ENCODE measurements at regions of chr9 and their contacts with region 1.

Region 1: DNA sequence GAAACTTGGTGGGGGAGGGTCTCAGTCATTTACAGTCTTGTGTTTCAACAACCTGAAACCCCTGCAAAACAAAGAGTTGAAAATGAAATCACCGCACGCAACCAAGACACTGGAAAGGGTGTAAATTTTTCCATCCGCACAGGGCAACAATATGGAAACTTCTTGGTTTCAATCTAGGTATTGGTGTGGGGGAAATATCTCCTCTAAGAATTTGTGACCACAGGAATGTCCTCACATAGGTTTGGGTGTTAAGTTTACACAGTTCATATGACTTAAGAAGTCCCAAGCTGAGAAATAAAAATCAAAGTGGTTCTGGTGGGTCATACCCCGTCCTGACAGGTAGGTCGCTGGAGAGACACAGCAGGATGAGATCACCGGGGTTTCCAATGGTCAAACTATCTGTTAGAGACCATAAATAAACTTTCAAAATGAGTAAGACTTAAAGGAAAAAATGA is 51.9 kb upstream of the PIP5K1B start:
- DNase-seq: no peak
- H3K4me3 ChIP-seq: no peak overlapping the region
- H3K27ac ChIP-seq: no peak overlapping the region
- H3K4me1 ChIP-seq: no peaks in the 10 kb centered on the region
- H3K27me3 ChIP-seq: no peaks in the 10 kb centered on the region

Region 2: GRCh38 chr9:68822596-68823165 is 169.5 kb after region 1 on chr9:
- in situ Hi-C with region 1: loop called (anchors 10 kb)
- DNase-seq: no peak
- H3K4me3 ChIP-seq: no peak overlapping the region
- H3K27ac ChIP-seq: no peak overlapping the region
- H3K4me1 ChIP-seq: no peaks in the 10 kb centered on the region
- H3K27me3 ChIP-seq: no peaks in the 10 kb centered on the region; the same call in none of the 2 replicates

Region 3: DNA sequence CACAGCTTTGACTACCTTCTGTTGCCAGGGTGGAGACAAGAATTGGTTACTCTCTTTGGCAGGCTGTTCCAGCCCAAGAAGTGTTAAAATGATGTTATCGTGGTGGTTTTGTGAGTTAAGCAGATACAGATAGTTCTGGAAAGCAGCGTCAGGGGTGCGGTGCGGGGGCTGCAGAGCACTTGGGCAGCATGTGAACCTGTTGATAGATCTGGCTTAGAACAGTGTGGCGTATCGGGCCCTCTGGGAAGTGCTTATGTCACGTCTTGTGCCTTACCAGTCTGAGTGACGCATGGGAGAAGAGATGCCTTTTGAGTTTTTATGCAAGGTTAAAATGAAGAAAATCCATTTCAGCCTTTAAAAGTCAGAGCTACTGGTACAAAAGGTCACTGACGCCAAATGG is 208.3 kb after region 1 on chr9:
- in situ Hi-C with region 1: no loop called
- DNase-seq: no peak
- H3K4me3 ChIP-seq: no peak overlapping the region
- H3K27ac ChIP-seq: no peak overlapping the region
- H3K4me1 ChIP-seq: no peaks in the 10 kb centered on the region
- H3K27me3 ChIP-seq: no peaks in the 10 kb centered on the region; the same call in 1 of the 2 replicates

Region 4: DNA sequence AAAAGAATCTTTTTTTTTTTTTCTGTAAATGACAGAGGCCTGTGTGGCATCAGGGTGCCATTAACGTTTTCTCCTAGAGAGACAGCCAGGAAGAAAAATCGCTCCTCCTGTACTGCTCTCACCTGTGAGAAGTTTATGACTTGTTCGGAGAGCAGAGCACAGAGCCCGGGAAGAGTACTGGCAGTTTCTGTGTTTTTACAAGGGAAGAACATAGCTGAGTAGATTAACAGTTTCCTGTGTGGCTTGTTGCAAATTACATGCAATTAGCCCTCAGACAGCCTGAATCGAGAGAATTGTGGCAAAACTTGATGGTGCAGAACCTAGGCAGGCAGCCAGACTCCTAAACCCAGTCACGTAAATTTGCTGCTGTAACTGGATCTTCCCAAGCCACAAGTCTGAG is 328.6 kb after region 1 on chr9:
- in situ Hi-C with region 1: no loop called
- DNase-seq: no peak
- H3K4me3 ChIP-seq: no peak overlapping the region
- H3K27ac ChIP-seq: no peak overlapping the region
- H3K4me1 ChIP-seq: no peaks in the 10 kb centered on the region
- H3K27me3 ChIP-seq: no peaks in the 10 kb centered on the region

Region 5: DNA sequence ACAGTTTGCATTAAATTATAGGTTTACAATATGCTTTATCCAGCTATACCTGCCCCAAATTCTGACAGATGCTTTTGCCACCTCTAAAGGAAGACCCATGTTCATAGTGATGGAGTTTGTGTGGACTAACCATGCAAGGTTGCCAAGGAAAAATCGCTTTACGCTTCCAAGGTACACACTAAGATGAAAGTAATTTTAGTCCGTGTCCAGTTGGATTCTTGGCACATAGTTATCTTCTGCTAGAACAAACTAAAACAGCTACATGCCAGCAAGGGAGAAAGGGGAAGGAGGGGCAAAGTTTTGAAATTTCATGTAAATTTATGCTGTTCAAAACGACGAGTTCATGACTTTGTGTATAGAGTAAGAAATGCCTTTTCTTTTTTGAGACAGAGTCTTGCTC is 423.4 kb after region 1 on chr9:
- in situ Hi-C with region 1: no loop called
- DNase-seq: no peak
- H3K4me3 ChIP-seq: no peak overlapping the region
- H3K27ac ChIP-seq: no peak overlapping the region
- H3K4me1 ChIP-seq: no peaks in the 10 kb centered on the region
- H3K27me3 ChIP-seq: no peaks in the 10 kb centered on the region